ENCODE measurements at regions of chr20 and their contacts with region 1.

Region 1: DNA sequence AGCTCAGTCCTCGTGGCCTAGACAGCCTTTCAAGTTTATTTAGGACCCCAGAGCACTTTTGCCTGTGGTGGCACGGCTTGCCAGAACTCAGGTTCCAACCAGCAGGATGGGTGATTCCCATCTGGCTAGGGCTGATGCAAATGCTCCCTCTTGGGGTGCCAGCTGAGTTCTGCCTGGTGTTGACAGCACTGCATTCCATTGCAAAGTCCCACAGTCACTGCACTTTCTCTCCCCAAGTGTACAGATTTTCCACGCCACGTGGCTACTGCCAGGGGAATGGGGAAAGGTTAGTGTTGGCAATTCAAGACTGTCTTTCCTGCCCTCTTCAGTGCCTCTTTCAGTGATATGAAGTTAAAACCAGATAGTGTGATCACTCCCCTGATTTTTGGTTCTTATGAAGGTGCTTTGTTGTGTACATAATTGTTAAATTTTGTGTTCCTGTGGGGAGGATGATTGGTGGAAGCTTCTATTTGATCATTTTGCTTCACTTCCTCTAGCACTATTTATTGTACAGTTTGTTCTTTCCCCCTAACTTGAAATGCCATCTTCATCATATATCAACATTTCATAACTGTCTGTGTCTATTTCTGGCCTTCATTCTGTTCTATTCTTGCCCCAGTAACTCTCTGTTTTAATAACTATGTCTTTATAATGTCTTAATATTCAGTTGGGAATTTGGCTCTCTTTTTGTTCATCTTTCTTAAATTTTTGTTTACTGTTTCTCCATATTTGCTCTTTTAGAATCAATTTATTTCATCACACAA is 86.2 kb downstream of the CFAP61 start:
- DNase-seq: peak in 4 of 5 donors; percentile 38 to 81 (median 56)
- ATAC-seq: peak; percentile 93 to 96 (median 94)
- H3K4me3 ChIP-seq: no peak overlapping the region
- H3K27ac ChIP-seq: peak overlapping the region; percentile 37 to 82 (median 68)
- H3K4me1 ChIP-seq: peaks cover 0 to 21% (median 0%) of the 10 kb centered on the region in 12 donors
- H3K27me3 ChIP-seq: no peaks in the 10 kb centered on the region
- CTCF ChIP-seq: no peak
- POLR2A ChIP-seq: peak in 1 of 2 donors; percentile 33

Region 2: DNA sequence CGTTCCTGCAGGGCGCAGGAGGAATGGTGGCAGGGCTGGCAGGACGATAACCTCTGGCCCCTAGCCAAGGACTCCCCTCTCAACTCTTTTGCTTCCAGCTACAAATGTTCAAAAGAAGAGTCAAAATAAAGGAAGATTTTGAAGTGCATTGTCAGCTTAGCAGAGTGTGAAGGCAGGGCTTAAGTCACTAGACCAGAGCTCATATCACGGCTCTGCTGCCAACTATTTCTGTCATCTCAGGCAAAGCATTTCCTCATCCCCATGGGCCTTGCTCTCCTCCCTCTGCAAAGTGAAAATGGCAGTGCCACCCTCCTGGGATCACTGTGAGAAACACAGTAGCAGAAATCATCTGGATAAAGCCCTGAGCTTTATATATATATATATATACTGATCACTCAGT is 49.5 kb before region 1 on chr20:
- intact Hi-C with region 1: loop called in 4 of 10 experiments (anchors 2 to 5 kb)
- DNase-seq: peak in 4 of 5 donors; percentile 34 to 65 (median 44)
- ATAC-seq: peak; percentile 38 to 57 (median 49)
- H3K4me3 ChIP-seq: peak overlapping the region in 4 of 12 donors; percentile 2 to 42 (median 6)
- H3K27ac ChIP-seq: peak overlapping the region; percentile 20 to 98 (median 86)
- H3K4me1 ChIP-seq: peaks cover 0 to 19% (median 5%) of the 10 kb centered on the region in 12 donors
- H3K27me3 ChIP-seq: peaks cover 0 to 4% (median 0%) of the 10 kb centered on the region in 9 donors
- CTCF ChIP-seq: no peak
- POLR2A ChIP-seq: peak in 1 of 2 donors; percentile 35

Region 3: GRCh38 chr20:20199361-20200160 is 61.1 kb after region 1 on chr20:
- intact Hi-C with region 1: loop called in 1 of 10 experiments (anchors 5 kb)
- DNase-seq: no peak
- ATAC-seq: no peak
- H3K4me3 ChIP-seq: no peak overlapping the region
- H3K27ac ChIP-seq: no peak overlapping the region
- H3K4me1 ChIP-seq: peaks cover 0 to 34% (median 8%) of the 10 kb centered on the region in 12 donors
- H3K27me3 ChIP-seq: peaks cover 0 to 3% (median 0%) of the 10 kb centered on the region in 9 donors
- CTCF ChIP-seq: no peak
- POLR2A ChIP-seq: no peak

Measured in heart left ventricle (tissue), 16 donors.